Endothelial cell of umbilical vein (primary cell): ENCODE measurements at regions of chr9 and their contacts with region 1.

Region 1: DNA sequence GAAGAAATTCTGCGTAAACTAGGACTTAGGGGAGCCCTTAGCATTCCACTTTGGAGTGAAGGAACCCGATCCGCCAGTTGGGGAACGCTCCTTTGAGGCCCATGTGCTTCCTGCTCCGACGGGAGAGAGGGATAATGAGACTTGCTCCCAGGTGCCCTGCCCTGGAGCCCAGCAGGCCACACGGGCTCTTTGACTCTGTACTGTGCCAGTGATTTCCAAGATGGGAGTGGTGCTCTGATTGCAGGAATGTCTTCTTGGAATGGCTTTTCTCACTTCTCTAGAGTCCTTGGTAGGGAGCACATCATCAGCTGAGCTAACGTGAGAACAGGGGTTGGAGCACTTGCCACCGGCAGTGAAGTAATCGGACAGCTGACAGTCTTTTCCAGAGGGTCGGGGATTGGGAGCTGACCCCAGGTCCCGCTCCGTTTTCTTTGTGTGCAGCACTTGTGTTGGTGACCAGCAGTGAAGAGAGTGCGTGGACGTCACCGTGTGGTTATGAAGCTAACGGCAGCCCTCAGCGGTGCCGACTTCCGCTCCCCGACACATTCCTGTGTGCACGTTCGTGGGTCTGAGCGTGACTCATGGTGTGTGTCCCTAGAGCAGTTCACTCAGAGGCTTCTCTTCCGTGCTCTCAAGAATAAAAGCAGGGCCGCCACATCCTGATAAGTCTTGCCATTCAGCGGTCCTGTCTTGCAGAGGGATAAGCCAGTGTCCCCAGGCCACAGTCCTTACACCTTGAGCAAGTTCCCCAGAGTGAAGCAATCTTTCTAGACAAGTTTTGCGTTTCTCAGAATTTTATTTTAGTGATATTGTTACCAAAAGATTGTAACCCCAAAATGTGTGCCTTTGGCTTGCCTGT is 25.6 kb downstream of the ABL1 start:
- DNase-seq: peak; percentile 70
- H3K4me3 ChIP-seq: no peak overlapping the region
- H3K27ac ChIP-seq: peak overlapping the region; percentile 82
- H3K4me1 ChIP-seq: peaks cover 34% of the 10 kb centered on the region
- H3K27me3 ChIP-seq: no peaks in the 10 kb centered on the region
- CTCF ChIP-seq: peak in 1 of 2 donors; percentile 34
- POLR2A ChIP-seq: no peak

Region 2: GRCh38 chr9:130701056-130702022 is 159.3 kb before region 1 on chr9:
- CTCF ChIA-PET with region 1: interaction called, 327 read pairs
- POLR2A ChIA-PET with region 1: no interaction called
- dilution Hi-C with region 1: loop called (anchors 25 kb)
- intact Hi-C with region 1: loop called (anchors 1 kb)
- DNase-seq: peak; percentile 84
- H3K4me3 ChIP-seq: no peak overlapping the region
- H3K27ac ChIP-seq: no peak overlapping the region
- H3K4me1 ChIP-seq: peaks cover 2% of the 10 kb centered on the region
- H3K27me3 ChIP-seq: no peaks in the 10 kb centered on the region
- CTCF ChIP-seq: peak; percentile 97 to 99
- POLR2A ChIP-seq: no peak

Region 3: DNA sequence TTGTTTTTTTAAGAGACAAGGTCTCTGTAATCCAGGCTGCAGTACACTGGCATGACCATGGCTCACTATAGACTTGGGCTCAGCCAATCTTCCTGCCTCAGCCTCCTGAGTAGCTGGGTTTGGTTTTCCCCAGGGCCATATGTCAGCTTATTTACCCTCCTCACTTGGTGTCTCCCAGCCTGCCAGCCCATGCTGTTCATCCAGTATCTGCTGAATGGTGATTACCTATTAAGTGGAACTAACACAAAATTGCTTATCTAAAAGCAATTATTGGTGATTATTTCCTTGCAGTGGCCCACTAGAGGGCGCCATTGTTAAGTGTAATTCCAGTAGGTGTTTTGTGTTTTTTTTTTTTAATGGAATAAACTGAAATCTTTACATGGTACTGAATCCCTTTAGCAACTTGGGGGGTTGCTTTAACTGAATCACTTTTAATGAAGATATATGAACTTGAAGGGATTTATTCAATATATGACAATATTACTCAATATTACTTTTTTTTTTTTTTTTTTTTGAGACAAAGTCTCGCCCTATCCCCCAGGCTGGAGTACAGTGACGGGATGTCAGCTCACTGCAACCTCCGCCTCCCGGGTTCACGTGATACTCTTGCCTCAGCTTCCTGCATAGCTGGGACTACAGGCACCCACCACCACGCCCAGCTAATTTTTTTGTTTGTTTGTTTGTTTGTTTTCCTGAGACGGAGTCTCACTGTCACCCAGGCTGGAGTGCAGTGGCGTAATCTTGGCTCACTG is 153.3 kb before region 1 on chr9:
- CTCF ChIA-PET with region 1: interaction called, 327 read pairs
- POLR2A ChIA-PET with region 1: interaction called, 3 read pairs
- dilution Hi-C with region 1: no loop called
- intact Hi-C with region 1: loop called (anchors 1 kb)
- DNase-seq: peak; percentile 65
- H3K4me3 ChIP-seq: no peak overlapping the region
- H3K27ac ChIP-seq: no peak overlapping the region
- H3K4me1 ChIP-seq: no peaks in the 10 kb centered on the region
- H3K27me3 ChIP-seq: no peaks in the 10 kb centered on the region
- CTCF ChIP-seq: peak; percentile 36 to 66
- POLR2A ChIP-seq: no peak

Region 4: DNA sequence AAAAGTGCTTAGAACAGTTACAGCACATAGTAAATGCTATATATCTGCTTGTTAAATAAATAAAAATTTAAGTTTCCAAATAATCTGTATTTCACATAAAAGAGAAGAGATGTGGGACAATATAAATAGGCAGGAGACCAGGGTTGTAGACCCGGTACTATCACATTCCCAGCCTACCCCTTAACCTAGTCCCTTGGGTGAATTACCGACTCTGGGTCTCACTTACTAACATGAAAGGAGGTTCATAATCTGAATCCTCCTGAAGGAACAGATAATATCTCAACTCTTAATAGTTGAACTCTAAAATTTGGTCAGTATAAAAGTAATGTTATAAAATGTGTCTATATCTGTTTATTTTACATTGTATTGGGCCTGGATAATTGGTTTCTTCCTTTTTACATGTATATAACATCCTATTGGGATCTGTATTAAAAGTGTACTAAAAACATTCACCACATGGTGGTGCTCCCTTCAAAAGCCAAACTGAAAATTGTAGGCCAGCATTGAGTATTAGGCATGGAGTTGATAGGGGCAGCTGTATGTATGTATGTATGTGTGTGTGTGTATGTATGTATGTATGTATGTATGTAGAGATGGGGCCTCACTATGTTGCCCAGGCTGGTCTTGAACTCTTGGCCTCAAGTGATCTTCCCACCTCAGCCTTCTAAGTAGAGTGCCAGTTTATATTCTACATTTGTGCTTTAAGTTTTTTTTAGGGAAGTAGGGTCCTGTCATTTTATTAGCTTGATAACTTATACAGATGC is 89.8 kb before region 1 on chr9:
- CTCF ChIA-PET with region 1: interaction called, 78 read pairs
- POLR2A ChIA-PET with region 1: no interaction called
- dilution Hi-C with region 1: no loop called
- intact Hi-C with region 1: loop called (anchors 1 kb)
- DNase-seq: peak; percentile 81
- H3K4me3 ChIP-seq: no peak overlapping the region
- H3K27ac ChIP-seq: no peak overlapping the region
- H3K4me1 ChIP-seq: peaks cover 27% of the 10 kb centered on the region
- H3K27me3 ChIP-seq: no peaks in the 10 kb centered on the region
- CTCF ChIP-seq: peak; percentile 30 to 47
- POLR2A ChIP-seq: no peak

Region 5: GRCh38 chr9:130834371-130835311 is 26.0 kb before region 1 on chr9 and contains the start of gene ABL1:
- CTCF ChIA-PET with region 1: interaction called, 7 read pairs
- POLR2A ChIA-PET with region 1: no interaction called
- dilution Hi-C with region 1: no loop called
- intact Hi-C with region 1: loop called (anchors 1 kb)
- DNase-seq: peak; percentile 88
- H3K4me3 ChIP-seq: peak within 1 kb of the TSS; percentile 85 to 92 (median 89)
- H3K27ac ChIP-seq: peak within 1 kb of the TSS; percentile 85
- H3K4me1 ChIP-seq: peaks cover 47% of the 10 kb centered on the region
- H3K27me3 ChIP-seq: no peaks in the 10 kb centered on the region
- CTCF ChIP-seq: no peak
- POLR2A ChIP-seq: peak; percentile 60
- total RNA-seq, gene ABL1: 79.2 and 87.1 TPM in 2 replicates

Region 6: GRCh38 chr9:130847327-130848217 is 13.1 kb before region 1 on chr9:
- CTCF ChIA-PET with region 1: interaction called, 13 read pairs
- POLR2A ChIA-PET with region 1: no interaction called
- dilution Hi-C with region 1: no loop called
- intact Hi-C with region 1: loop called (anchors 1 kb)
- DNase-seq: peak; percentile 96
- H3K4me3 ChIP-seq: peak overlapping the region in 1 of 3 experiments; percentile 56
- H3K27ac ChIP-seq: peak overlapping the region; percentile 95
- H3K4me1 ChIP-seq: peaks cover 58% of the 10 kb centered on the region
- H3K27me3 ChIP-seq: no peaks in the 10 kb centered on the region
- CTCF ChIP-seq: peak in 1 of 2 donors; percentile 4
- POLR2A ChIP-seq: peak; percentile 55

Region 7: GRCh38 chr9:131423171-131423581 is 562.5 kb after region 1 on chr9:
- CTCF ChIA-PET with region 1: no interaction called
- POLR2A ChIA-PET with region 1: no interaction called
- dilution Hi-C with region 1: no loop called
- intact Hi-C with region 1: no loop called
- DNase-seq: peak; percentile 91
- H3K4me3 ChIP-seq: no peak overlapping the region
- H3K27ac ChIP-seq: peak overlapping the region; percentile 89
- H3K4me1 ChIP-seq: peaks cover 42% of the 10 kb centered on the region
- H3K27me3 ChIP-seq: no peaks in the 10 kb centered on the region
- CTCF ChIP-seq: no peak
- POLR2A ChIP-seq: no peak